Activated B cell treated with CpG ODN at 0.5 μM for 24 hours (primary cell): ENCODE measurements at regions of chr14 and their contacts with region 1.

Region 1: DNA sequence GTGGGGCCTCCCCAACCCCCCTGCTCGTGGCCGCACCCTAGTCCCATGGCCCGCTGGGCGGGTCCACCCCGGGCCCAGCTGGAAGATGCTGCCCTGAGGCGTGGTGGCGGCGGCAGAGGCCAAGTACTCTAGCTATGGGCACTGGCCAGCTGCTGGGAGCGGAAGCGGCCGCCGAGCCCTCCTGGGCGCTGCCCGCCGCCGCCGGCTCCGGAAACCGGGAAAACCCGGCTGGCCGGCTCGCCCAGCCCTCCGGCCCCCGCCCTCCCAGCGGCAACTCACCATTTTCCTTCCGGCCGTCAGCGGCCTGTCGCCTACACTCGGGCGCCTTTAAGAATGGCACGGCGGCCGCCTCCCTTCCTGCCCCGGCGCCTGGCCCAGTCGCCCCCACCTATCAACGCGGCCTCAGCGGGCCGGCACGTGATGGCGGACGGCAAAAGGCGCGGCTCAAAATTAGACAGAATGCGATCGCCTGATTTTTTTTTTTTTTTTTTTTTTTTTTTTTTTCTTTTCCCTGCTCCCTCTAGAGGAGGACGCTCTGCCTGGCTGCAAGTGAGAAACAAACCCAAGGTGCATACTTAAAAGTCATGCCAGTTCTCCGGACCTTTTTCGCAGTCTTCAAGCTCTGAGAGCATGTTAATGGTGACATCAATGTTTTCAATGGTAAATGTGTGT is at the start of gene GMFB:
- DNase-seq: peak; percentile 80
- ATAC-seq: peak; percentile 96
- H3K4me3 Mint-ChIP-seq: peak within 1 kb of the TSS; percentile 94
- H3K27ac Mint-ChIP-seq: peak within 1 kb of the TSS; percentile 94
- H3K4me1 Mint-ChIP-seq: peaks cover 66% of the 10 kb centered on the region
- H3K27me3 Mint-ChIP-seq: no peaks in the 10 kb centered on the region
- CTCF ChIP-seq: no peak
- total RNA-seq, gene GMFB: 39.5 and 43.0 TPM in 2 replicates

Region 2: DNA sequence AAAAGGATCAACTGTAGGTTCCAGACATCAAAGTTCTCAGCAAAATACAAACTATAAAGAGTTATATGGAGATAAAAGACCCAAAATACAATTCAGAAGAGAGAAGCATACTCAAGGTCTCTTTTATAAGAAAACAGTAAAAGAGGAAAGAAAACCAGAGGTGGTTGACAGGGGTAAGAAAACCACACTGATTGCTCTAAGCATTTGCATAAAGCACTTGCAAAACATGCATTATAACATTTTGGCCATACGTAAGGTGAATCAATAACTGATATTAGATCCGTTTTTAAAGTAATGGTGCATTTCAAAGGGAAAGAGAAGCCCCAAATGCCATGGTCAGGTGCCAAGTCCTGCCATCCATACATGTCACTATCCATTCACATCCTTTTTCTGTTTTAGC is 1341.6 kb before region 1 on chr14:
- CTCF ChIA-PET with region 1: no interaction called
- POLR2A ChIA-PET with region 1: no interaction called
- intact Hi-C with region 1: loop called (anchors 5 kb)
- DNase-seq: no peak
- ATAC-seq: no peak
- H3K4me3 Mint-ChIP-seq: peak overlapping the region; percentile 70
- H3K27ac Mint-ChIP-seq: peak overlapping the region; percentile 71
- H3K4me1 Mint-ChIP-seq: peaks cover 75% of the 10 kb centered on the region
- H3K27me3 Mint-ChIP-seq: no peaks in the 10 kb centered on the region
- CTCF ChIP-seq: no peak

Region 3: GRCh38 chr14:53547593-53547992 is 941.2 kb before region 1 on chr14:
- CTCF ChIA-PET with region 1: no interaction called
- POLR2A ChIA-PET with region 1: interaction called, 10 read pairs
- intact Hi-C with region 1: no loop called
- DNase-seq: no peak
- ATAC-seq: no peak
- H3K4me3 Mint-ChIP-seq: no peak overlapping the region
- H3K27ac Mint-ChIP-seq: no peak overlapping the region
- H3K4me1 Mint-ChIP-seq: peaks cover 14% of the 10 kb centered on the region
- H3K27me3 Mint-ChIP-seq: peaks cover 3% of the 10 kb centered on the region
- CTCF ChIP-seq: no peak

Region 4: DNA sequence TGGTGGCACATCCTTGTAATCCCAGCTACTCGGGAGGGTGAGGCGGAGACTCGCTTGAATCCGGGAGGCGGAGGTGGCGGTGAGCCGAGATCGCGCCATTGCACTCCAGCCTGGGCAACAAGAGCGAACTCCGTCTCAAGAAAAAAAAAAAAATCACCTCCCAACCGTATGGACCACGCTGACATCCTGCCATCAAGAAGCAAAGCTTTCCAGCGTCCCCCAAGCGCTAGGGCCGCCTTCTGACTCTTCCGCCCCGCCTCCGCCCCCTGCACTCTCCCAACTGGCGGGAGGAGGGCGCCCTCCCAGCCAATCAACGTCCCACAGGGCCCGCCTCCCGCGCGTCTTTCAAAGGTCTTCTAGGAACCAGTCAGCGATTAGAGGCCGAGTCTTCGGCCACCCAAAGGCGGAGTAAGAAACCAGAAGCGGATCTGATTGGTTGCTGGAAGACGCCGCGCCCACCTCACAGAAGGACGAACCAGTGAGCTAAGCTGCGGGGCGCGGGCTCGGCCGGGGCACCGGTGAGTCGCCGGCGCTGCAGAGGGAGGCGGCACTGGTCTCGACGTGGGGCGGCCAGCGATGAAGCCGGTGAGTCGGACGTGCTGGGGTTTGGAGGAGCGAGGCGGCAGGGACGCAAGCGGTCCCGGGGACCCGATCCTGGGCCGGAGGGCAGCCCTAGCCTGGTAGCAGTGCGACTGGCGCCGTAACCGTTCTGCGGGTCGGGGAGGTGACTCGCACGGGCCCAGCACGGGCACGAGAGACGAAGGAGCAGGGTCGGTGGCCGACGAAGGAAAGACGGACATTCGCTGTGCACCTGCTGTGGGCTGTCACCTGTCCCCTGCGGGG is 92.1 kb before region 1 on chr14 and contains the start of gene CDKN3:
- CTCF ChIA-PET with region 1: no interaction called
- POLR2A ChIA-PET with region 1: no interaction called
- intact Hi-C with region 1: loop called (anchors 2 kb)
- DNase-seq: peak; percentile 94
- ATAC-seq: peak; percentile 94
- H3K4me3 Mint-ChIP-seq: peak within 1 kb of the TSS; percentile 86
- H3K27ac Mint-ChIP-seq: peak within 1 kb of the TSS; percentile 82
- H3K4me1 Mint-ChIP-seq: peaks cover 23% of the 10 kb centered on the region
- H3K27me3 Mint-ChIP-seq: no peaks in the 10 kb centered on the region
- CTCF ChIP-seq: no peak
- total RNA-seq, gene CDKN3: 0.91 and 1.6 TPM in 2 replicates

Region 5: DNA sequence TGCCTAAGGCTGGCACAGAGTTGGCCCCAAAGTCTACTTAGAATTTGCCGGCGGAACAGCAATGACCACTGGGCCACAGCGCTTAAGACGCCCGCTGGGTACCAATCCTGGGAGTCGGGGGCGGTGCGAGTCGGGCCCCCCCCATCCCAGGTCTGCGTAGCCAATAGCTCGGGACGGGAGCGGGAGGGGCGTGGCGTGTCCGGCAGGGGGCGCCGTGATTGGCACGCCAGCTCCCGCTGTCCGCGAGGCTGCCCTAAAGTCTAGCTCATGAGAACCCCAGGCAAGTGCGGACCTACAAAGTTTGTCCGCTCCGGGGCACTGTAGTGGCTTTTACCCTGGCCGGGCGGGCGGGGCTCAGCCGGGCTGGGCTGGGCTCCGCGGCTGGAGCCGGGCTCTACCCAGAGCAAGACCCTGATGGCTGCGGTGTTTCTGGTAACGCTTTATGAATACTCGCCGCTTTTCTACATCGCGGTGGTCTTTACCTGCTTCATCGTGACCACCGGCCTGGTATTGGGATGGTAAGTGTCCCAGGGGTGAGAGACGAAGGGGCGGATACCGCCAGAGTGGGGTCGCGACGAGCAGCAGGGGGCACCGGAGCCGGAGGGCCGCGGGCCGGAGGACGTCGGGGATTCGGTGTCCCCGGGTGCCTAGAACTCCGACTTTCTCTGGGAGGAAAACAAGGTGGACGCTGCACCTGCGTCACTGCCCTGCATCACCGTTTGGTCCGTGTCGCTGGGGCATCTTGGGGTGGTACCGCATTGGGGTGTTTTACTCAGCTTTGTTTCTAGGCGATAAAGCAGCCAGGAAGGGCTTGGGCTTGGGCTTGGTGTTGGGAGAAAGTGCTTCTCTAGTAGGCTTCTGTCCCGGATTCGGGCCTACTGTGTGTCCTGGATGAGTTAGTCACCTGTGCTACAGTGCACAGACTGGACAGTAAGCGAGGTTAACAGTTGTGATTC is 21.0 kb after region 1 on chr14 and contains the start of gene CGRRF1:
- CTCF ChIA-PET with region 1: interaction called, 7 read pairs
- POLR2A ChIA-PET with region 1: interaction called, 37 read pairs
- intact Hi-C with region 1: loop called (anchors 1 kb)
- DNase-seq: peak; percentile 98
- ATAC-seq: peak; percentile 98
- H3K4me3 Mint-ChIP-seq: peak within 1 kb of the TSS; percentile 95
- H3K27ac Mint-ChIP-seq: peak within 1 kb of the TSS; percentile 89
- H3K4me1 Mint-ChIP-seq: peaks cover 41% of the 10 kb centered on the region
- H3K27me3 Mint-ChIP-seq: no peaks in the 10 kb centered on the region
- CTCF ChIP-seq: no peak
- total RNA-seq, gene CGRRF1: 11.9 and 14.1 TPM in 2 replicates

Region 6: DNA sequence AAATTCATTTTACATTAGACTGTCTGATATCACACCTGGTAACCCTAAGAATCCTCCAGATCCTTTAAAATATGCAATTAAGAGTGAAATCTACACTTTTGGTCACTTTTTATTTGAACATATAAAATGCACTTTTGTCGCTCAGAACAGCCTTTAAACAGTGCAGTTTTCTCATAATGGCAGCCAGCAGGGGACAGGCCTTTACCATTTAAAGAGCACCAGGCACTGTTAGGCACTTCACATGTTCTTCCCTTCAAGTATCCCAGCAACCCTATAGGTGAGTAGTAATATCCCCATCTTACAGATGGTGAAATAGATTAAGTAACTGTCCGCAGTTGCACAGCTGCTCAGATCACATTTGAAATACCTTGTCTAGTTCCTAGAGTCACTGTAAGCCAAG is 66.9 kb after region 1 on chr14:
- CTCF ChIA-PET with region 1: no interaction called
- POLR2A ChIA-PET with region 1: interaction called, 10 read pairs
- intact Hi-C with region 1: no loop called
- DNase-seq: no peak
- ATAC-seq: no peak
- H3K4me3 Mint-ChIP-seq: no peak overlapping the region
- H3K27ac Mint-ChIP-seq: no peak overlapping the region
- H3K4me1 Mint-ChIP-seq: no peaks in the 10 kb centered on the region
- H3K27me3 Mint-ChIP-seq: no peaks in the 10 kb centered on the region
- CTCF ChIP-seq: no peak